GM12878 (cell line): ENCODE measurements at regions of chr6 and their contacts with region 1.

Region 1: DNA sequence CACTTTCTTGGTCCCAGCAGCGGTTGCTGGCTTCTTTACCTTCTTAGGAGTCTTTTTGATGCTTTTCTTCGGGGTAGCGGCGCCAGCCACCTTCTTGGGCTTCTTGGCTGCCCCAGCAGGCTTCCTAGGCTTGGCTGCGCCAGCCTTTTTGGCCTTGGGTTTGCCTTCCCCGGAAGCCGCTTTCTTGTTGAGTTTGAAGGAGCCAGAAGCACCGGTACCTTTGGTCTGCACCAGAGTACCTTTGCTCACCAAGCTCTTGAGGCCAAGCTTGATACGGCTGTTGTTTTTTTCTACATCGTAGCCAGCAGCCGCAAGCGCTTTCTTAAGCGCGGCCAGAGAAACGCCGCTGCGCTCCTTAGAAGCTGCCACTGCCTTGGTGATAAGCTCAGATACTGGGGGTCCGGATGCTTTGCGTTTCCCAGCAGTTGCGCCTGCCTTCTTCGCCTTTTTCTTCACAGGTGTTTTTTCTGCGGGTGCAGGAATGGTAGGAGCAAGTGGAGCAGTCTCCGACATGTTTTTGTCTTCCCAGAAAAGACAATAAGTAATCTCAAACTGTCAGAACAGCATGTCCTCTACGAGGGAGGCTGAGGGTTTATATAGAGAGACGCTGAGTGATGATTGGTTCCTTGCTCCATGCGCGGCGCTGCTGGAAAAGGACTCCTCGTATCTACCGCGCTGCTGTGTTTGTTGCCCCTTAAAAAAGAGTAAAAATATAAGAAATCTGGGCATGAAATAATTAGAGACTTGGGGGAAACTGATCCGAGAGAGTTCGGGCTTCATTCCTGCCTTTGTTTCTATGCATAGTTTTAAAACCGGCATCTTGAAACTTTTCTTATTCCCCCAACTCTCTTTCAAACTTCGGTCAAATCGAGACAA is 130.3 kb upstream of the BTN3A2 start:
- DNase-seq: peak; percentile 96
- ATAC-seq: peak; percentile 62
- H3K4me3 ChIP-seq: peak overlapping the region; percentile 83
- H3K27ac ChIP-seq: peak overlapping the region; percentile 95
- H3K4me1 ChIP-seq: peaks cover 2% of the 10 kb centered on the region
- H3K27me3 ChIP-seq: no peaks in the 10 kb centered on the region
- CTCF ChIP-seq: no peak; a peak in 1 of 6 replicates
- EP300 ChIP-seq: peak in 1 of 2 experiments; percentile 64; a peak in 2 of 4 replicates
- POLR2A ChIP-seq: peak; percentile 92
- RAD21 ChIP-seq: 0 out of 2 replicates have a peak, but pooled peaks have one; percentile 13

Region 2: GRCh38 chr6:26141378-26141904 is 93.2 kb before region 1 on chr6:
- CTCF ChIA-PET with region 1: no interaction called
- POLR2A ChIA-PET with region 1: no interaction called
- RAD21 ChIA-PET with region 1: no interaction called
- SMC1A ChIA-PET with region 1: no interaction called
- in situ Hi-C with region 1: no loop called
- intact Hi-C with region 1: no loop called
- DNase-seq: no peak
- ATAC-seq: no peak
- H3K4me3 ChIP-seq: no peak overlapping the region
- H3K27ac ChIP-seq: no peak overlapping the region
- H3K4me1 ChIP-seq: no peaks in the 10 kb centered on the region; the same call in 1 of the 2 replicates
- H3K27me3 ChIP-seq: no peaks in the 10 kb centered on the region
- CTCF ChIP-seq: no peak
- EP300 ChIP-seq: no peak
- POLR2A ChIP-seq: no peak
- RAD21 ChIP-seq: no peak

Region 3: GRCh38 chr6:26223650-26224546 is 10.8 kb before region 1 on chr6:
- CTCF ChIA-PET with region 1: interaction called, 4 read pairs
- POLR2A ChIA-PET with region 1: interaction called, 28 read pairs
- RAD21 ChIA-PET with region 1: interaction called, 6 read pairs
- SMC1A ChIA-PET with region 1: interaction called, 18 read pairs
- in situ Hi-C with region 1: no loop called
- intact Hi-C with region 1: loop called (anchors 1 kb)
- DNase-seq: peak; percentile 78
- ATAC-seq: peak; percentile 85
- H3K4me3 ChIP-seq: peak overlapping the region; percentile 79
- H3K27ac ChIP-seq: peak overlapping the region; percentile 96
- H3K4me1 ChIP-seq: peaks cover 21% of the 10 kb centered on the region
- H3K27me3 ChIP-seq: no peaks in the 10 kb centered on the region
- CTCF ChIP-seq: no peak
- EP300 ChIP-seq: no peak
- POLR2A ChIP-seq: no peak
- RAD21 ChIP-seq: no peak

Region 4: GRCh38 chr6:26285143-26286134 is 50.8 kb after region 1 on chr6:
- CTCF ChIA-PET with region 1: no interaction called
- POLR2A ChIA-PET with region 1: interaction called, 4 read pairs
- RAD21 ChIA-PET with region 1: interaction called, 12 read pairs
- SMC1A ChIA-PET with region 1: interaction called, 3 read pairs
- in situ Hi-C with region 1: no loop called
- intact Hi-C with region 1: no loop called
- DNase-seq: peak; percentile 100
- ATAC-seq: peak; percentile 84
- H3K4me3 ChIP-seq: peak overlapping the region; percentile 75
- H3K27ac ChIP-seq: peak overlapping the region; percentile 97
- H3K4me1 ChIP-seq: no peaks in the 10 kb centered on the region; the same call in 1 of the 2 replicates
- H3K27me3 ChIP-seq: no peaks in the 10 kb centered on the region
- CTCF ChIP-seq: no peak
- EP300 ChIP-seq: peak in 1 of 2 experiments; percentile 72; a peak in 3 of 4 replicates
- POLR2A ChIP-seq: peak; percentile 95
- RAD21 ChIP-seq: no peak